Activated naive CD8-positive, alpha-beta T cell treated with anti-CD3 and anti-CD28 coated beads, Interleukin-2, amount 10 ng/mL, durations not matched to agents 7 days and 5 days (primary cell): ENCODE measurements at regions of chr10 and their contacts with region 1.

Region 1: DNA sequence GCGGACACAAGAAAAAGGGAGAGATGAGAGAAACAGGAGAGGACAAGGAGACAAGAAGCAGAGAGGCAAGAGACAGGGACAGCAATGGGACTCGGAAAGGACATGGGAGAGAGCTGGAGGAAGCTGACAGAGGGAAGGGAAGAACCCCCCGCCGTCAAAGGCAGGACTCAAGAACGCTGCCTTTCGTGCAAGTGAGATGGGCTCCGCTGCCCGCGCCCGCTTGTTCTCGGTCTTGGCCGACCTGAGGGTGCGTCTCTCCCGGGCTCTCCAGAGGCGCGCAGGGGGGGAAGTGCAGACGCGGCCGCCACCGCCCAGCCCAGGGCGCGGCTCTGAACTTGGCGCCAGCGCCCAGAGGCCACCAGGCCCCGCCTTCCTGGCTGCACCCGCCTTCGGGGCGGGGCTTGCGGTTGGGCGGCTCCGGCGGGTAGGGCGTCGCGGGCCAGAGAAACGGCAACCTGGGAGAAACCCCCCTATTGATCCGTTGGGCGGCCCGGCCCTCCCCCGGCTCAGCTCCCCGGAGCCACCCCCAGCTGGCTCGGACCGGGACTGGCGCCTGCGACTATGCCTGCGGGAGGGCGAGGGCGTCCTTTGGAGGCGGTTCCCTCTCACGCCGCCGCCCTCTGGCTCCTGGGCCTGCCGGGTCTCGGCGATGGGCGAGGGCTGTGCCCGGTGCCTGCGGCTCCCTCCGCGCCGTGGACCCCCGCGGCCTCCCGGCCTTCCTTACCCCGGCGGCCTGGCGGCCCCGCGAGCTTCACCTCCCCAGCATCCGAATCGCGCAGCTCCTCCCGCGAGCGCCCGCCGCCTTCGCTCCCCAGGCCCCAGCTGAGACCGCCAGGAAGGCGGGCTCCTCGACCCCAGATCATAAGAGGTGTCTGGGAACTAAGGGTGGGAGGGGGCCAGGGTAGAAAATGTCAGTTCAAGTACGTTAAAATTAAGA is 2.2 kb upstream of the ANTXRL start:
- DNase-seq: peak; percentile 93
- ATAC-seq: peak; percentile 82
- H3K4me3 Mint-ChIP-seq: peak overlapping the region; percentile 97
- H3K27ac Mint-ChIP-seq: peak overlapping the region; percentile 93
- H3K4me1 Mint-ChIP-seq: peaks cover 31% of the 10 kb centered on the region
- H3K27me3 Mint-ChIP-seq: peaks cover 9% of the 10 kb centered on the region

Region 2: GRCh38 chr10:46106410-46107255 is 177.9 kb before region 1 on chr10:
- POLR2A ChIA-PET with region 1: interaction called, 20 read pairs
- DNase-seq: peak; percentile 67
- ATAC-seq: peak; percentile 95
- H3K4me3 Mint-ChIP-seq: peak overlapping the region; percentile 86
- H3K27ac Mint-ChIP-seq: peak overlapping the region; percentile 28
- H3K4me1 Mint-ChIP-seq: peaks cover 15% of the 10 kb centered on the region
- H3K27me3 Mint-ChIP-seq: peaks cover 10% of the 10 kb centered on the region

Region 3: GRCh38 chr10:46247808-46248569 is 36.6 kb before region 1 on chr10:
- POLR2A ChIA-PET with region 1: no interaction called
- DNase-seq: no peak
- ATAC-seq: no peak
- H3K4me3 Mint-ChIP-seq: no peak overlapping the region
- H3K27ac Mint-ChIP-seq: no peak overlapping the region
- H3K4me1 Mint-ChIP-seq: no peaks in the 10 kb centered on the region
- H3K27me3 Mint-ChIP-seq: no peaks in the 10 kb centered on the region

Region 4: GRCh38 chr10:46268076-46268881 is 16.3 kb before region 1 on chr10:
- POLR2A ChIA-PET with region 1: interaction called, 76 read pairs
- DNase-seq: peak; percentile 75
- ATAC-seq: peak; percentile 86
- H3K4me3 Mint-ChIP-seq: no peak overlapping the region
- H3K27ac Mint-ChIP-seq: no peak overlapping the region
- H3K4me1 Mint-ChIP-seq: peaks cover 31% of the 10 kb centered on the region
- H3K27me3 Mint-ChIP-seq: no peaks in the 10 kb centered on the region

Region 5: GRCh38 chr10:46311501-46312441 is 27.2 kb after region 1 on chr10:
- POLR2A ChIA-PET with region 1: no interaction called
- DNase-seq: no peak
- ATAC-seq: no peak
- H3K4me3 Mint-ChIP-seq: no peak overlapping the region
- H3K27ac Mint-ChIP-seq: no peak overlapping the region
- H3K4me1 Mint-ChIP-seq: no peaks in the 10 kb centered on the region
- H3K27me3 Mint-ChIP-seq: no peaks in the 10 kb centered on the region